ENCODE measurements at regions of chr19 and their contacts with region 1.

Region 1: GRCh38 chr19:13181747-13182388 is 31.7 kb downstream of the IER2 start:
- DNase-seq: no peak
- ATAC-seq: peak; percentile 54
- H3K4me3 ChIP-seq: peak overlapping the region; percentile 20 to 58 (median 55); a peak in 5 of 6 replicates
- H3K27ac ChIP-seq: no peak overlapping the region
- H3K4me1 ChIP-seq: peaks cover 22% of the 10 kb centered on the region
- H3K27me3 ChIP-seq: 0 out of 5 replicates have a peak, but pooled peaks cover 0 to 4% of the 10 kb centered on the region in 2 experiments
- CTCF ChIP-seq: no peak
- EP300 ChIP-seq: no peak
- POLR2A ChIP-seq: no peak
- RAD21 ChIP-seq: no peak

Region 2: DNA sequence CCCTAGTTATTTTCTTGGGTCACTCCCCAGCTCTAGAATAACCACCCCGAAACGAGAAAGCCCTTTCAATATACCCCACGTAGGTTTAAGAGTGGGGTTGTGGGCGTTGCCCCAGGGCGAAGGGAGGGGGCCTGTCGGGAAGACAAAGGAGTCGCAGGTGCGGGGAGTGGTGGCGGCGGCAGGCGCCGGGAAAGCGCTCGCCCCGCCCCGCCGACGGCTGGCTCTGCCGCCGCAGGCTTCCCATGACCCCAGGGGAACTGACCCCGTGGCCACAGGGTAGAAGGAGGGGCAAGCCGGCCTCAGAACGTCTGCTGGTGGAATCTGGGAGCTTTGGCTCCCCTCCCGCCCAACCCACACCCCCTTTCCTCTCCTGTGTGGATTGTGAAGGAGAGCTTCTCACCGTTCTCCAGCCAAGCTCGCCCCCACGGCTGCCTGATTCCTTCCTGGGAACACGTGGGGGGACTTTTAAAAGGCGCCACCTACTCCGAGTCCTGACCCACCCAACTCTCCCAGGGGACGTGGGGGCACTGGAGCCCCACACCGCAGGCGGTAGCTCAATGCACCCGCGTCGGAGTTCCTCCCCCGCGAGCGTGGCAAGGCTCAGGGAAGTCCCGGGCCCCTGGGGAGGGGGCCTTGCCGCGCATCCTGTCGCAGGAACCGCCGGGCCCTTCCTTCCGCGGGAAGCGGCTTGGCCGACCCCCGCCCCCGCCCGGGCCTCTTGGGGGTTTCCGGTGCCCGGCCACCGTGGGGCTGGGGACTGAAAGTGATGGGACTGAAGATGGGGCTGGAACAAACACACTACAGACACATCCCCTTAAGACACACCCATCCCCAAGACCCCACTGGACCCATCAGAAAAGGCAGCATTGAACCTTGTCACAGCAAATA is 26.2 kb before region 1 on chr19:
- CTCF ChIA-PET with region 1: no interaction called
- POLR2A ChIA-PET with region 1: interaction called, 15 read pairs
- in situ Hi-C with region 1: no loop called
- intact Hi-C with region 1: no loop called
- DNase-seq: peak; percentile 69
- ATAC-seq: peak; percentile 48
- H3K4me3 ChIP-seq: peak overlapping the region; percentile 57 to 91 (median 74)
- H3K27ac ChIP-seq: peak overlapping the region; percentile 95
- H3K4me1 ChIP-seq: peaks cover 32% of the 10 kb centered on the region
- H3K27me3 ChIP-seq: no peaks in the 10 kb centered on the region; a peak in 1 of 5 replicates
- CTCF ChIP-seq: no peak
- EP300 ChIP-seq: peak in 1 of 2 experiments; percentile 33; a peak in 2 of 4 replicates
- POLR2A ChIP-seq: peak in 1 of 2 experiments; percentile 26; a peak in 1 of 4 replicates
- RAD21 ChIP-seq: no peak

Region 3: GRCh38 chr19:13162518-13163314 is 19.2 kb before region 1 on chr19:
- CTCF ChIA-PET with region 1: no interaction called
- POLR2A ChIA-PET with region 1: interaction called, 25 read pairs
- in situ Hi-C with region 1: no loop called
- intact Hi-C with region 1: no loop called
- DNase-seq: peak; percentile 98
- ATAC-seq: peak; percentile 84
- H3K4me3 ChIP-seq: peak overlapping the region; percentile 63 to 81 (median 64)
- H3K27ac ChIP-seq: peak overlapping the region; percentile 99
- H3K4me1 ChIP-seq: peaks cover 52% of the 10 kb centered on the region
- H3K27me3 ChIP-seq: no peaks in the 10 kb centered on the region
- CTCF ChIP-seq: 0 out of 2 replicates have a peak, but pooled peaks have one; percentile 26
- EP300 ChIP-seq: no peak; a peak in 1 of 4 replicates
- POLR2A ChIP-seq: peak; percentile 82 to 90
- RAD21 ChIP-seq: peak; percentile 38

Region 4: GRCh38 chr19:13169810-13170209 is 12.1 kb before region 1 on chr19:
- CTCF ChIA-PET with region 1: no interaction called
- POLR2A ChIA-PET with region 1: interaction called, 25 read pairs
- in situ Hi-C with region 1: no loop called
- intact Hi-C with region 1: no loop called
- DNase-seq: no peak
- ATAC-seq: no peak
- H3K4me3 ChIP-seq: no peak overlapping the region
- H3K27ac ChIP-seq: peak overlapping the region; percentile 43
- H3K4me1 ChIP-seq: peaks cover 57% of the 10 kb centered on the region
- H3K27me3 ChIP-seq: no peaks in the 10 kb centered on the region
- CTCF ChIP-seq: no peak
- EP300 ChIP-seq: no peak
- POLR2A ChIP-seq: no peak
- RAD21 ChIP-seq: no peak

Region 5: DNA sequence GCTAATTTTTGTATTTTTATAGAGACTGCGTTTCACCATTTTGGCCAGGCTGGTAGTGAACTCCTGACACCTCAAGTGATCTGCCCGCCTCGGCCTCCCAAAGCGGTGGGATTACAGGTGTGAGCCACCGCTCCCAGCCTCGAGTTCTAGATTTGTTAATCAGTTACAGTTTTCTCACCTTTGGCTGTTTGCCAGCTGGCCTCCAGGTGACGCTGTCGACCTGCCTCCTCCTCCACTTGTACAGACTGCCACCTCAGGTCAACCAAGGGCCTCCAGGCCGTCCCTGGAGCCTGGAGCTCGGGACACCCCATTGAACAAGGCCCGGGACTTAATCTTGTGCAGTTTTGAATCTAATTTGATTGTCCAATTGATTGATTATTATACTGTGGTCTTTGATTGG is 13.8 kb after region 1 on chr19:
- CTCF ChIA-PET with region 1: no interaction called
- POLR2A ChIA-PET with region 1: interaction called, 11 read pairs
- in situ Hi-C with region 1: no loop called
- intact Hi-C with region 1: no loop called
- DNase-seq: peak; percentile 80
- ATAC-seq: peak; percentile 78
- H3K4me3 ChIP-seq: no peak overlapping the region
- H3K27ac ChIP-seq: no peak overlapping the region
- H3K4me1 ChIP-seq: peaks cover 38% of the 10 kb centered on the region
- H3K27me3 ChIP-seq: no peaks in the 10 kb centered on the region
- CTCF ChIP-seq: peak; percentile 88
- EP300 ChIP-seq: no peak
- POLR2A ChIP-seq: no peak
- RAD21 ChIP-seq: peak; percentile 51

Region 6: DNA sequence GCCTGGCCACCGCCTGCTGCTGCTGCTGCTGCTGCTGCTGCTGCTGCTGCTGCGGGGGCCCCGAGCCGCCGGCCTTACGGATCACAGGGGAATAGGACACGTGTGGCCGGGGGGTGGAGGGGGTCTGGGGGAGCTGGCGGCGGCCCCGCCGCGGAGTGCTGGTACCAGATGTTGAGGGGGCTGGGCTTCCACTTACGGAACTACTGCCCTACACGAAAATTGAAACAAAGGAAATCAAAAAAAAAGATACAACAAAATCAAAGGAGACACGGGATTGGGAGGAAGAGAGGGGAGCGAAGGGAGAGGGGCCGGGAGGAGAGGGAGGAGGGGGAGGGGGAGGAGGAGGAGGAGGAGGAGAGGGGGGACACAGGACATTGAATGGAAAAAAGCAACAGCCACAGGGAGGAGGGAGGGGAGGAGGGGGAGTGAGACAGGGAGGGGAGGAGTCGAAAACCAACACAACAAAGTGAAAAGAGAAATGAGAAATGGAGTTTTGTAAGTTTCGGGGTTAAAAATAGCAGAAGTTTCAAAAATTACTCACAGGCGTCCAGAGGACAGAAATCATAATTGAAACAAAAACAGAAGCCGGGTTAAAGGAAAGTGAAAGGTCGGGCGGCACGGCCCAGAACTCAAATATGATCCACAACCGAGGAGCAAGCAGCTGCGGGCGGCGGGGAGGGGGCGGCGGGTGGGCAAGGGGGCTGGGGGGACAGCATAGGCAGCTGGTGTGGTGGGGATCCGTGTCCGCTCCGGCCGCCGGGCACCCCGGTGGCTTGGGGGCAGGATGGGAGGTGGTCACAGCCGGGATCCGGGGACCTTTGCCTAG is 26.2 kb after region 1 on chr19:
- CTCF ChIA-PET with region 1: no interaction called
- POLR2A ChIA-PET with region 1: no interaction called
- in situ Hi-C with region 1: no loop called
- intact Hi-C with region 1: no loop called
- DNase-seq: no peak
- ATAC-seq: no peak
- H3K4me3 ChIP-seq: no peak overlapping the region
- H3K27ac ChIP-seq: no peak overlapping the region
- H3K4me1 ChIP-seq: peaks cover 6% of the 10 kb centered on the region; the same call in 1 of the 2 replicates
- H3K27me3 ChIP-seq: no peaks in the 10 kb centered on the region; a peak in 3 of 5 replicates
- CTCF ChIP-seq: no peak
- EP300 ChIP-seq: no peak
- POLR2A ChIP-seq: no peak
- RAD21 ChIP-seq: no peak

Region 7: GRCh38 chr19:13234518-13234917 is 52.6 kb after region 1 on chr19:
- CTCF ChIA-PET with region 1: no interaction called
- POLR2A ChIA-PET with region 1: no interaction called
- in situ Hi-C with region 1: no loop called
- intact Hi-C with region 1: no loop called
- DNase-seq: peak; percentile 42
- ATAC-seq: peak; percentile 69
- H3K4me3 ChIP-seq: no peak overlapping the region
- H3K27ac ChIP-seq: no peak overlapping the region
- H3K4me1 ChIP-seq: no peaks in the 10 kb centered on the region
- H3K27me3 ChIP-seq: peaks cover 3 to 24% of the 10 kb centered on the region in 2 experiments; a peak in 4 of 5 replicates
- CTCF ChIP-seq: peak; percentile 88
- EP300 ChIP-seq: no peak
- POLR2A ChIP-seq: no peak
- RAD21 ChIP-seq: peak; percentile 44; the same call in 1 of the 2 replicates